HEK293 (cell line): ENCODE measurements at regions of chr19 and their contacts with region 1.

Region 1: DNA sequence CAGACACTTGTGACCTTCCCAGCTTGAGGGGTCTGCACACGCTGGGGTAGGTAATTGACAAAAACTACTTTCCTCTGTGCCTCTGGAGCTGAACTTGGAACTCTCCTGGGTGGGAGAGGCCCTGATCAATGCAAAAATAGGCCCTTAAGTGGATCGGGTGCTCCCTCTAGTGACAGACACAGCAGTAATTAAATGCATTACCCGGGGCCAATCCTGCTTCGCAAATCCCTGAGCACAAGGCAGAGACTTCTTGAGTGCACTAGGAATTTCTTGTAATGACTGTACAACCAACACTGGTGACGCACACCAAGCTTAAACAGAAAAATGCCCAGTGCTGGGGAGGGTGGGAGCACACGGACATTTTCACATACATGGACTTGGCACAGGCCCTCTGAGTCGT is 10.6 kb upstream of the UBE2S start:
- H3K4me3 ChIP-seq: no peak overlapping the region
- H3K27ac ChIP-seq: no peak overlapping the region
- H3K4me1 ChIP-seq: no peaks in the 10 kb centered on the region
- CTCF ChIP-seq: peak; percentile 61

Region 2: DNA sequence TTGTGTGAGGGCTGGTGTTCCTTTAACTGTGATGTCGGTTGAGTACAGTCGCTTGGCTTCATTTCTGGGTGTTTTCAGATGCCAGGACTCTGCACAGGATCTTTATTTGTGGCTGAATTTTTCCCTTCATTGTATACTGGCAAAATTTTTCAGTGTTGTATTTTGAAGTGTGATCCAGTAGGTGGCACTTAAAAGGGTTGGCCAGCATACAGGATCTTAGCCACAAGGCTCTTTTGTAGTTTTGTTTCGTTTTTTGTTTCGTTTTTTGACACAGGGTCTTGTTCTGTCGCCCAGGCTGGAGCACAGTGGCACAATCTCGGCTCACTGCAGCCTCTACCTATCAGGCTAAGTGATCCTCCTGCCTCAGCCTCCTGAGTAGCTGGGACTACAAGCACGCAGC is 535.4 kb before region 1 on chr19:
- CTCF ChIA-PET with region 1: interaction called, 10 read pairs
- POLR2A ChIA-PET with region 1: interaction called, 6 read pairs
- H3K4me3 ChIP-seq: no peak overlapping the region
- H3K27ac ChIP-seq: no peak overlapping the region
- H3K4me1 ChIP-seq: no peaks in the 10 kb centered on the region
- CTCF ChIP-seq: 0 out of 2 replicates have a peak, but pooled peaks have one; percentile 8

Region 3: DNA sequence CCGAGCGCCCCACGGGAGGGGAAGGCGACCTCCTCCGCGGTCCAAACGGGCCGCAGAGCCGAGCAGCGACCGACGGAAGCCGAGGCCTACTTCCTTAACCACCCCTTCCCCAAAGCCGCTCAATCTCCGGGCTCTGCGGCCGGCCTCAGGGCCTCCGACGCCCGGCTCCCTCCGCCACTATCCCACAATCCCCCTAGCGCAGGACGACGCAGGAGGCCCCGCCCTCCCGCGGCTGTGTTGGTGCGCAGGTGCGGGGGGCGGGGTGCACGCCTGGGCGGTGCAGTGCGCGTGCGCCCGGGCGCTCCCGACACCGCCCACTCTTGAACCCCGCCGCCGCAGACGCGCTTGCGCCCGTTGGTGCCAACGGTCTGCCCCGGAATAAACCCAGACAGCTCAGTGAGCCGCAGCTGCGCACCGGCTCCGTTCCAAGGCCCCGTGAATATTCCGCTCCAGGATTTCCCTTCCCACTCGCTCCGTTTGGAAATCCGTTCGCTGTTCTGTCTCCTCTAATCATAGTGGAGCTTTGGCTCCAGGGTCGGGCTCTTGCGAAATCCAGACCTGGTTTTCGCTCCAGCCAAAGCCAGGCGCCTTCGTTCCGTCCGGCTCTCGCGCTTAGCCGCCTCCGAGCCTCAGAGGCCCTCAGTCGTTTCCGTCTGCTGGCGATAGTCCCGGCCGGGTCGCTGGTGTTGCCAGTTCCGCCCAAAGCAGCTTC is 159.2 kb before region 1 on chr19 and contains the start of gene PPP6R1:
- CTCF ChIA-PET with region 1: interaction called, 10 read pairs
- POLR2A ChIA-PET with region 1: interaction called, 4 read pairs
- H3K4me3 ChIP-seq: peak within 1 kb of the TSS; percentile 96
- H3K27ac ChIP-seq: peak within 1 kb of the TSS; percentile 94
- H3K4me1 ChIP-seq: peaks cover 28% of the 10 kb centered on the region
- CTCF ChIP-seq: no peak

Region 4: DNA sequence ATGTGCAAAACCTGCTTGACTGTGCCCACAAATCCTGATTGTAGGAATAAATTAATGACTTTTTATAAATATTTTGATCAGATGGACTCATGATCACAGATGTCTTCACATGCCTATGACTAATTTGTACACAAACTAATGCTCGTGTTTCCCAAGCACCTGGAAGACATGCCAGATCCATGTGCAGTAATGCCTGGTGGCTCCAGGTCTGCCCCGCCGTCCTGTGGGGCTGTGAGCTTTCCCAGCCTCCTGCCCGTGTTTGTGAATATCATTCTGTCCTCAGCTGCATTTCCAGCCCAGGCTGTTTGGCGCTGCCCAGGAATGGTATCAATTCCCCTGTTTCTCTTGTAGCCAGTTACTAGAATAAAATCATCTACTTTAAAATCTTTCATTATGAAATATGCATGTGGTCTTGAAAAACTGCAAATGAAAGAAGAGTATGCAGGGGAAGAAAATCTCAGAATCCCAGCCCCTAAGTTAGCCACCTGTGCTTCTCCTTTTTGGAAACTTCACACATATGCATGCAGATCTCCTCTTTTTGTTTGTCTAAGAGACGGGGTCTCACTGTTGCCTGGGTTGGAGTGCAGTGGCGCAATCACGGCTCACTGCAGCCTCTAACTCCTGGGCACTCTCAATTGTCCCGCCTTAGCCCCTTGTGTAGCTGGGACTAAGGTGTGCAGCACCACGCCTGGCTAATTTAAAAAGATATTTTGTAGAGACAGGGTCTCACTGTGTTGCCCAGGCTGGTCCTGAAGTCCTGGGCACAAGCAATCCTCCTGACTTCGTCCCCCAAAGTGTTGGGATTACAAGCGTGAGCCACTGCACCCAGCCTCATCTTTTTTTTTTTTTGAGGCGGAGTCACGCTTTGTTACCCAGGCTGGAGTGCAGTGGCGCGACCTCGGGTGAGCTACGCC is 26.2 kb before region 1 on chr19:
- CTCF ChIA-PET with region 1: interaction called, 10 read pairs
- POLR2A ChIA-PET with region 1: no interaction called
- H3K4me3 ChIP-seq: no peak overlapping the region
- H3K27ac ChIP-seq: no peak overlapping the region
- H3K4me1 ChIP-seq: peaks cover 24% of the 10 kb centered on the region
- CTCF ChIP-seq: no peak

Region 5: DNA sequence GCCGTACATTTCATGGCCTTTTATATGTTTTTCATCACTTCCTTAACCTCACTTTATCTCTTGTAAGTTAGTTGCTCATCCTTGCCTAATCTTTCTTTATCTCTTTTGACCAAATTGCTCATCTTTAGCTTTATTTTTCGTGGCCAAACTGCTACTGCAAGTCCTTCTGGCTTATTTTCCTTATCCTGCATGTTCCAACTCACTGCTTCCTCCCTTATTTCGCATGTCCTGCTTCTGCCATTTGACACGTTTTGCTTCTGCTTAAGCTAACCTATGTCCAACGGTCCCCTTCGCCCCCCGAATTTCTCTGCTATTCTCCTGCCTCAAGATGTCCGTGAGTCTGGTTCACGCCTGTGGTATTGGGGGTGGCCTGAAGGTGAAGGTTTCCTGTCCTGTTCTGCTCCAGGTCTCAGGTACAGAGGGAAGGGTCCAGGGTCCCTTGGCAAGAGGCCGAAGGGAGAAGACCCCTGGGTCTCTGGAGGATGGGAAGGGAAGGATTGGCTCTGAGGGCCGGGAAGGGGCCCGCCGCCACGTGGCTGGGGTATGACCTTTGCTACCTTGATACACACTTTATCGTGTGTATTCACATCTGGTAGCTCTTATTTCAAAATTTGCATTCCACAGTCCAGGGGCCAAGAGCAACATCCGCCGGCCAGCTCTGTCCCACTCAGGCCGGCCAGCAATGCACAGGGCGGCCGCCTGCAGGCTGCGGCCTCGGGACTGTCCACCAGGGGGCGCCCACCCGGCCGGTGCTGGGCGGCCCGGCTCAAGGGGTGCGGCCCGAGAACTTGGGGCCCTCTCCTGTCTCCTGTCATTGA is 49.3 kb after region 1 on chr19:
- CTCF ChIA-PET with region 1: interaction called, 11 read pairs
- POLR2A ChIA-PET with region 1: no interaction called
- H3K4me3 ChIP-seq: no peak overlapping the region
- H3K27ac ChIP-seq: no peak overlapping the region
- H3K4me1 ChIP-seq: no peaks in the 10 kb centered on the region
- CTCF ChIP-seq: peak; percentile 91

Region 6: GRCh38 chr19:55653758-55654539 is 235.8 kb after region 1 on chr19:
- CTCF ChIA-PET with region 1: no interaction called
- POLR2A ChIA-PET with region 1: no interaction called
- H3K4me3 ChIP-seq: peak overlapping the region; percentile 55
- H3K27ac ChIP-seq: peak overlapping the region; percentile 100
- H3K4me1 ChIP-seq: peaks cover 11% of the 10 kb centered on the region
- CTCF ChIP-seq: peak; percentile 100